Transverse colon (tissue), 4 donors: ENCODE measurements at regions of chr5 and their contacts with region 1.

Region 1: GRCh38 chr5:138575194-138576015 is at the start of gene HSPA9:
- DNase-seq: peak; percentile 99
- H3K4me3 ChIP-seq: peak within 1 kb of the TSS; percentile 79 to 97 (median 87)
- H3K27ac ChIP-seq: peak within 1 kb of the TSS; percentile 95 to 100 (median 98)
- H3K4me1 ChIP-seq: peaks cover 3 to 27% (median 16%) of the 10 kb centered on the region in 4 donors
- H3K27me3 ChIP-seq: no peaks in the 10 kb centered on the region
- CTCF ChIP-seq: peak in 4 of 5 experiments; percentile 17 to 62 (median 46)
- EP300 ChIP-seq: no peak
- POLR2A ChIP-seq: peak; percentile 93
- total RNA-seq, gene HSPA9: 82.7 to 236 (median 175) TPM

Region 2: GRCh38 chr5:139141446-139142204 is 566.2 kb after region 1 on chr5:
- in situ Hi-C with region 1: no loop called
- intact Hi-C with region 1: loop called (anchors 5 kb)
- DNase-seq: peak; percentile 59
- H3K4me3 ChIP-seq: no peak overlapping the region
- H3K27ac ChIP-seq: peak overlapping the region; percentile 54 to 68 (median 62)
- H3K4me1 ChIP-seq: peaks cover 14 to 50% (median 21%) of the 10 kb centered on the region in 4 donors
- H3K27me3 ChIP-seq: no peaks in the 10 kb centered on the region
- CTCF ChIP-seq: no peak
- EP300 ChIP-seq: no peak
- POLR2A ChIP-seq: no peak

Region 3: GRCh38 chr5:139273572-139274289 is 698.3 kb after region 1 on chr5:
- in situ Hi-C with region 1: loop called in 1 of 4 experiments (anchors 25 kb)
- intact Hi-C with region 1: no loop called
- DNase-seq: peak; percentile 94
- H3K4me3 ChIP-seq: peak overlapping the region; percentile 31 to 58 (median 45)
- H3K27ac ChIP-seq: peak overlapping the region; percentile 83 to 92 (median 87)
- H3K4me1 ChIP-seq: peaks cover 13 to 76% (median 51%) of the 10 kb centered on the region in 4 donors
- H3K27me3 ChIP-seq: no peaks in the 10 kb centered on the region
- CTCF ChIP-seq: peak in 4 of 5 experiments; percentile 9 to 44 (median 26)
- EP300 ChIP-seq: no peak
- POLR2A ChIP-seq: peak; percentile 73

Region 4: GRCh38 chr5:139293504-139294373 is 718.3 kb after region 1 on chr5 and contains the start of gene MATR3:
- in situ Hi-C with region 1: no loop called
- intact Hi-C with region 1: loop called (anchors 10 kb)
- DNase-seq: peak; percentile 97
- H3K4me3 ChIP-seq: peak within 1 kb of the TSS; percentile 75 to 91 (median 84)
- H3K27ac ChIP-seq: peak within 1 kb of the TSS; percentile 96 to 100 (median 99)
- H3K4me1 ChIP-seq: peaks cover 28 to 43% (median 41%) of the 10 kb centered on the region in 4 donors
- H3K27me3 ChIP-seq: no peaks in the 10 kb centered on the region
- CTCF ChIP-seq: no peak
- EP300 ChIP-seq: no peak
- POLR2A ChIP-seq: peak; percentile 99
- total RNA-seq, gene MATR3: 97.3 to 190 (median 134) TPM